OCI-LY7 (cell line): ENCODE measurements at regions of chr1 and their contacts with region 1.

Region 1: DNA sequence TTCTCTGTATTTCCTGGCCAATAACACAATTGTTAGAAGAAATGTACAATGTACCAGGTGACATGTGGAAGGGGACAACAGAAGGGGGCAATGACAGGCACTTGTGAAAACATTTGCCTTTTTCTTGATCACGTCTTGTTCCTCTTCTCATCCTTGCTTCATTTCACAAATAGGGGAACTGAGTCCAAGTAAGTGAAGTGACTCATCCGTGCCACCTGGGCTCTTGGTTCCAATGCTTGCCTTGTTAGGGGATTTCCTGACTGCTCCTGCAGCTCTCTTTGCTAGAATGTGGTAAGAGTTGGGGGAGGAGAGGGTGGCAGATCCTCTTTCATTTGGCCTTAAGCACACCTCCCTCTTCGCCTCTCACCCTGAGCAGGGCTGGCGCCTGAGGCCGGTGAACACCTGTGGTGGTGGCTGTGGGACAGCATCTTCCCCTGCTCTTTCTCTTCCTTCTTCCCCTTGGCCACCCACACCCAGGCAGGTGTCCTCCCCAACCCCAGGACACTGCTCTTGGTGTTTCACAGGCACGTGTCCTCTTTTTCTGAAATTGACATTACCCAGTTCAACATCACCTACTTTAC is 2.2 kb upstream of the RHEX start:
- DNase-seq: peak; percentile 98
- H3K4me3 ChIP-seq: peak overlapping the region; percentile 55
- H3K27ac ChIP-seq: peak overlapping the region; percentile 98
- H3K4me1 ChIP-seq: peaks cover 74% of the 10 kb centered on the region
- CTCF ChIP-seq: peak; percentile 71

Region 2: DNA sequence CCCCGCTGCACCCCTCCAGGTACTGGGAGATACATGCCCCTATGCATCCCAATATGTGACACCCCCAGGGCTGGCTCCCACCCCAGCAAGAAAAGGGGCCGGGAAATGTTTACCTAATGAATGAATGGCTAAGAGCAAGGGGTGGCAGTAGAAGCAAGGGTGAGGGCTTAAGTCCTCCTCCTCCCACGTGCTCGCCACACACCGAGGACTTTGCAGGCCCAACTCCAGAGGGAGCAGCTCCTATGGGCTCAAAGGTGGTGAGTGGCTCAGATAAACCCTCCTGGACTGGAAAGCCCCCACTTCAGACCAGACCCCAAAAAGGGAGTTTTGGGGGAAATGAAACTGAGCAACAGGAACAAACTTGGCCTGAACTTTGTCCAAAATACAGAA is 381.8 kb before region 1 on chr1:
- CTCF ChIA-PET with region 1: no interaction called
- POLR2A ChIA-PET with region 1: no interaction called
- intact Hi-C with region 1: loop called (anchors 5 kb)
- DNase-seq: peak; percentile 61
- H3K4me3 ChIP-seq: peak overlapping the region; percentile 55
- H3K27ac ChIP-seq: peak overlapping the region; percentile 35
- H3K4me1 ChIP-seq: peaks cover 87% of the 10 kb centered on the region
- CTCF ChIP-seq: peak; percentile 47; the same call in 1 of the 2 replicates

Region 3: GRCh38 chr1:206030714-206031113 is 20.0 kb before region 1 on chr1:
- CTCF ChIA-PET with region 1: interaction called, 3 read pairs
- POLR2A ChIA-PET with region 1: interaction called, 18 read pairs
- intact Hi-C with region 1: loop called (anchors 1 kb)
- DNase-seq: peak; percentile 93
- H3K4me3 ChIP-seq: no peak overlapping the region
- H3K27ac ChIP-seq: peak overlapping the region; percentile 1
- H3K4me1 ChIP-seq: peaks cover 43% of the 10 kb centered on the region
- CTCF ChIP-seq: peak; percentile 99

Region 4: GRCh38 chr1:206469933-206470691 is 419.4 kb after region 1 on chr1 and contains the start of gene IKBKE:
- CTCF ChIA-PET with region 1: no interaction called
- POLR2A ChIA-PET with region 1: no interaction called
- intact Hi-C with region 1: loop called (anchors 10 kb)
- DNase-seq: peak; percentile 89
- H3K4me3 ChIP-seq: peak within 1 kb of the TSS; percentile 82
- H3K27ac ChIP-seq: peak within 1 kb of the TSS; percentile 68
- H3K4me1 ChIP-seq: peaks cover 57% of the 10 kb centered on the region
- CTCF ChIP-seq: peak; percentile 52
- total RNA-seq, gene IKBKE: 23.8 and 23.9 TPM in 2 replicates

Region 5: GRCh38 chr1:206797534-206798383 is 747.0 kb after region 1 on chr1:
- CTCF ChIA-PET with region 1: no interaction called
- POLR2A ChIA-PET with region 1: no interaction called
- intact Hi-C with region 1: no loop called
- DNase-seq: peak; percentile 65
- H3K4me3 ChIP-seq: no peak overlapping the region
- H3K27ac ChIP-seq: no peak overlapping the region
- H3K4me1 ChIP-seq: peaks cover 3% of the 10 kb centered on the region
- CTCF ChIP-seq: peak; percentile 87

Region 6: DNA sequence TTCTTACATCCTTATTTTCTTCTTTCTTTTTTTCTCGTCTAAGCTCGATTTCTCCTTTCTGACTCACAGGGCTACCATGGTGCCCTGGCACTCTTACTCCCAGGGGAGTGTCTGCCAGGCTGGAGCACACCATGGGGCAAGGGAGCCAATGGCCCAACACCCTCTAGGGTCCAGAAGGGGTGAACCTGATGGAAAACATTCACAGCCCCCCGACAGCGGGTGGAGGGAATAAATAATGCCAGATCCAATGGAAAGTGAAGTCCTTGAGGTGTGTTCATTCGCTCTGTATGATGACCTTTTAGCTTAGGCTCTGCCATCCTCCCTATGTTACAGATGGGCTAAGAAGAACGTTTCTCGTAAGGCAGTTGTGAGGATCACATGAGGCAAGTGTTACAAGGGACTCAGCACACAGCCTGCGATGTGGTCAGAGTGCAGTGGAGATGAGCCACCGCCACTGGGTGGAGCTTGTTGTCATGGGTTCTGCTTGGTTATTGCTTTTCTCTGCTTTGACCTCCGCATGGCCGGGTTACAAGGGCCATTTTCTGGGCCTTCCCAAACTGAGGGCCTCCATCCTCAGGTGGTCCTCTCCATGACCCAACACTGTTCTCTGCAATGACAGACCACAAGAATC is 874.5 kb after region 1 on chr1:
- CTCF ChIA-PET with region 1: no interaction called
- POLR2A ChIA-PET with region 1: interaction called, 3 read pairs
- intact Hi-C with region 1: loop called (anchors 10 kb)
- DNase-seq: peak; percentile 89
- H3K4me3 ChIP-seq: no peak overlapping the region
- H3K27ac ChIP-seq: peak overlapping the region; percentile 53
- H3K4me1 ChIP-seq: peaks cover 56% of the 10 kb centered on the region
- CTCF ChIP-seq: peak; percentile 64